ENCODE measurements at regions of chr3 and their contacts with region 1.

Region 1: DNA sequence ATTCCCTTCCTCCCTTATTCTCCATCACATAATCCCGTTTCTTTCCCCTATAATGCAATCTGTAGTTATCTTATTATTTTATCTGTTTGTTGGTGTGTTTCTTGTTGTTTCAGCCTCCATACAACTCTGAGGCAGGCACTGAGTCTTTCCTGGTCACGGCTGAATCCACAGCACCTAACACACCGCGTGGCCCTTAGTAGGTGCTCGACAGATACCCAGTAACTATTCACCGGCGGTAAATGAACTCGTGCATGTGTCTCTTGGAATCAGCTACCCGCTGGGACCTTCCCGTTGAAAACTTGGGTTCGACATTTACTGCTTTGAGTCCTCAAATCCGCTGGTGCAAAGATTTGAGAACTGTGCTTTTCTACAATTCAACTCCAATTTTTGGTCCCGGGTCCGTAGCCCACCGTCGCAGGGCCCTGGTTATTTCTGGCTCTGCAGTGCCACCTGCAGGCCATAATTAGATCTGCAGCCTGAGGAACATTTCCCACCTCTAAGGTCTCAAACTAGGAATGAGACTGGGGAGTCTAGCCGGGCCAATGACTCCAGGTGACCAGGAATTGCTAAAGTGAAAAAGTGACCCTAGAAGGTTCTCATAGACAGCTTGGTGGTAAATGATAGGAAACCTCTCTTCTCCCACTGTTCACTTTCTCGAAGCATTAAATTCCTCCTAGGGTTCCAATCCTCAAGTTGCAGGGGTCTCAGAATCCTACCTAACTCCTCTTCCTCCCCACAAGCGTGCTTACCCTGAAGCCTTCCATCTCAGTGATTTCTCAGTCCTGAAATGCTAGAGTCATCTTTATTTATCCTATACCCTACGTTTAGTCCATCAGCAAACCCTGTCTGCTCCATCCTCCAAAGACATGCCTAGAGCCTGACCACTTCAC is 40.0 kb upstream of the TRH start:
- DNase-seq: no peak
- H3K4me3 ChIP-seq: no peak overlapping the region
- H3K27ac ChIP-seq: no peak overlapping the region
- H3K4me1 ChIP-seq: no peaks in the 10 kb centered on the region
- H3K27me3 ChIP-seq: no peaks in the 10 kb centered on the region
- CTCF ChIP-seq: peak; percentile 80 to 90

Region 2: GRCh38 chr3:129327510-129327909 is 607.0 kb before region 1 on chr3:
- CTCF ChIA-PET with region 1: no interaction called
- dilution Hi-C with region 1: no loop called
- in situ Hi-C with region 1: no loop called
- intact Hi-C with region 1: loop called (anchors 5 kb)
- DNase-seq: no peak
- H3K4me3 ChIP-seq: no peak overlapping the region
- H3K27ac ChIP-seq: no peak overlapping the region
- H3K4me1 ChIP-seq: no peaks in the 10 kb centered on the region
- H3K27me3 ChIP-seq: no peaks in the 10 kb centered on the region
- CTCF ChIP-seq: no peak

Region 3: GRCh38 chr3:129633751-129634392 is 300.6 kb before region 1 on chr3:
- CTCF ChIA-PET with region 1: no interaction called
- dilution Hi-C with region 1: loop called (anchors 10 kb)
- in situ Hi-C with region 1: loop called in 1 of 2 experiments (anchors 10 kb)
- intact Hi-C with region 1: no loop called
- DNase-seq: no peak
- H3K4me3 ChIP-seq: no peak overlapping the region
- H3K27ac ChIP-seq: no peak overlapping the region
- H3K4me1 ChIP-seq: no peaks in the 10 kb centered on the region
- H3K27me3 ChIP-seq: no peaks in the 10 kb centered on the region
- CTCF ChIP-seq: no peak

Region 4: GRCh38 chr3:129756871-129757270 is 177.6 kb before region 1 on chr3:
- CTCF ChIA-PET with region 1: no interaction called
- dilution Hi-C with region 1: no loop called
- in situ Hi-C with region 1: no loop called
- intact Hi-C with region 1: no loop called
- DNase-seq: no peak
- H3K4me3 ChIP-seq: no peak overlapping the region
- H3K27ac ChIP-seq: no peak overlapping the region
- H3K4me1 ChIP-seq: no peaks in the 10 kb centered on the region
- H3K27me3 ChIP-seq: no peaks in the 10 kb centered on the region
- CTCF ChIP-seq: no peak

Region 5: GRCh38 chr3:129824926-129825541 is 109.4 kb before region 1 on chr3:
- CTCF ChIA-PET with region 1: no interaction called
- dilution Hi-C with region 1: no loop called
- in situ Hi-C with region 1: no loop called
- intact Hi-C with region 1: loop called (anchors 1 kb)
- DNase-seq: peak; percentile 29
- H3K4me3 ChIP-seq: no peak overlapping the region
- H3K27ac ChIP-seq: no peak overlapping the region
- H3K4me1 ChIP-seq: peaks cover 5% of the 10 kb centered on the region
- H3K27me3 ChIP-seq: no peaks in the 10 kb centered on the region
- CTCF ChIP-seq: peak; percentile 52 to 70

Region 6: DNA sequence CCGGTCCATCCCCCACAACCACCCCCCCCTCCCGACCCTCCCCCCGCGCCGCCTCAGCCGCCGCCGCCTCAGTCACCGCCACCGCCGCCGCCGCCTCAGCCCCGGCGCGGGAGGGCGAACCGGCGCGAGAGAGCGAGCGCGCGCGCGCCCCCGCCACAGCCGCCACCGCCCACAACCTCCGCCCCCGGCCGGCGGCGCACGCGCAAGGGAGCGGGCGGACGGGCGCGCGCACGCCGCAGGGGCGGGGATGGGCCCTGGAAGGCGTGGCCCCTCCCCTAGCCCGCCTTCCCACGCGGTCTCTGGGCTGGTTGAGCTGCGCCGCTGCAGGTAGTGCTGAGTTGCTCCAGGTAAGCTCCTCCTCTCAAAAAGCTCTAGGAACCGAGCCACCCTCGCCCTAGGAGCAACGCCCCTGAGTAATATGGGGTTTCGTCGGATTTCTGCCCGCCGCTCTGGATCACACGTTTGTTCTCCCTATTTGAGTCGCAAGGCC is 40.9 kb before region 1 on chr3 and contains the start of gene TMCC1:
- CTCF ChIA-PET with region 1: no interaction called
- dilution Hi-C with region 1: no loop called
- in situ Hi-C with region 1: no loop called
- intact Hi-C with region 1: loop called (anchors 1 kb)
- DNase-seq: peak; percentile 93
- H3K4me3 ChIP-seq: peak within 1 kb of the TSS; percentile 71 to 93 (median 88)
- H3K27ac ChIP-seq: peak within 1 kb of the TSS; percentile 95
- H3K4me1 ChIP-seq: peaks cover 27% of the 10 kb centered on the region
- H3K27me3 ChIP-seq: no peaks in the 10 kb centered on the region
- CTCF ChIP-seq: no peak
- total RNA-seq, gene TMCC1: 28.2 to 34.3 TPM